GM12878 (cell line): ENCODE measurements at regions of chr9 and their contacts with region 1.

Region 1: DNA sequence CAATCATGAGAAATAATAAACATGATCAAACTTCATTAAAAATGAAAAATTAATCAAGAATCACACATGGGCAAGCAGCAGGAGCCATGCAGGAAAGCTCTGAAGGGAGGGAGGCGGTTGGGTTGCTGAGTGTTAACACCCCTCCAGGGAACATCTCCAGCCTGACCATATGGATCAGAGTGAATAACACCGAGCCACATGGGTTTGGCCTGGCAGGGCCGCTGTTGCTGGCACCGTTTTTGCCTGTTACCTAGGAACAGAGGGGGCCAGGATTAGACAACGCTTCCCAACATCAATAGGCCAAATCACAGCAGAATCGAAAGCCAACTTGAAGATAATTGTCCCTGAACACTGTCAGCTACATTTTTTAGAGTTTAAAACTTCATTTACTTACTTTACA is 160.2 kb downstream of the DENND1A start:
- DNase-seq: no peak
- ATAC-seq: no peak
- H3K4me3 ChIP-seq: no peak overlapping the region
- H3K27ac ChIP-seq: no peak overlapping the region
- H3K4me1 ChIP-seq: peaks cover 3% of the 10 kb centered on the region; the same call in 1 of the 2 replicates
- H3K27me3 ChIP-seq: no peaks in the 10 kb centered on the region
- CTCF ChIP-seq: no peak
- EP300 ChIP-seq: no peak
- POLR2A ChIP-seq: no peak
- RAD21 ChIP-seq: no peak

Region 2: DNA sequence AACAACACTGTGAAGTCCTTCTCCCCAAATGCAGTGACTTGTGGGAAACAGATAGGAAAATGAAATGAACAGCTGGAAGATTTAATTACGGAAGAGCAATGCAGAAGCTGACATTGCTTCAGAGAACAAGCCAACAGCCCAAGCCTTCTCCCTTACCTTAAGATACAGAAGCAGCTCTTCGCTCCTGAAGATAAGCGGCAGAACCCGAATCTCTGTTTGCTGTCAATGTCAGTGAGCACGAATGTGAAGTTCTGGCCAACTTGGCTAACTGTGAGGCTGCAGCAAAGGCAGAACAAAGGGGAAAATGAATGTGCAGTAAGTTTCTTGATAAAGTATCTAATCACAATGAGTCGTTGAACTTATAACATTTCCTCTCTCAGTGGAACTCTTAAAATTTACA is 12.2 kb before region 1 on chr9:
- CTCF ChIA-PET with region 1: interaction called, 8 read pairs
- POLR2A ChIA-PET with region 1: interaction called, 10 read pairs
- RAD21 ChIA-PET with region 1: interaction called, 18 read pairs
- SMC1A ChIA-PET with region 1: interaction called, 92 read pairs
- in situ Hi-C with region 1: no loop called
- intact Hi-C with region 1: no loop called
- DNase-seq: no peak
- ATAC-seq: no peak
- H3K4me3 ChIP-seq: no peak overlapping the region
- H3K27ac ChIP-seq: no peak overlapping the region
- H3K4me1 ChIP-seq: peaks cover 17% of the 10 kb centered on the region
- H3K27me3 ChIP-seq: no peaks in the 10 kb centered on the region
- CTCF ChIP-seq: no peak
- EP300 ChIP-seq: no peak
- POLR2A ChIP-seq: no peak
- RAD21 ChIP-seq: no peak

Region 3: GRCh38 chr9:123784518-123784917 is 14.8 kb after region 1 on chr9:
- CTCF ChIA-PET with region 1: interaction called, 4 read pairs
- POLR2A ChIA-PET with region 1: no interaction called
- RAD21 ChIA-PET with region 1: no interaction called
- SMC1A ChIA-PET with region 1: interaction called, 10 read pairs
- in situ Hi-C with region 1: no loop called
- intact Hi-C with region 1: no loop called
- DNase-seq: no peak
- ATAC-seq: no peak
- H3K4me3 ChIP-seq: no peak overlapping the region
- H3K27ac ChIP-seq: no peak overlapping the region
- H3K4me1 ChIP-seq: no peaks in the 10 kb centered on the region
- H3K27me3 ChIP-seq: no peaks in the 10 kb centered on the region
- CTCF ChIP-seq: no peak
- EP300 ChIP-seq: no peak
- POLR2A ChIP-seq: no peak
- RAD21 ChIP-seq: no peak

Region 4: GRCh38 chr9:123887837-123888236 is 118.1 kb after region 1 on chr9:
- CTCF ChIA-PET with region 1: no interaction called
- POLR2A ChIA-PET with region 1: no interaction called
- RAD21 ChIA-PET with region 1: no interaction called
- SMC1A ChIA-PET with region 1: no interaction called
- in situ Hi-C with region 1: no loop called
- intact Hi-C with region 1: no loop called
- DNase-seq: no peak
- ATAC-seq: no peak
- H3K4me3 ChIP-seq: no peak overlapping the region
- H3K27ac ChIP-seq: no peak overlapping the region
- H3K4me1 ChIP-seq: no peaks in the 10 kb centered on the region
- H3K27me3 ChIP-seq: no peaks in the 10 kb centered on the region
- CTCF ChIP-seq: no peak
- EP300 ChIP-seq: no peak
- POLR2A ChIP-seq: no peak
- RAD21 ChIP-seq: no peak